ENCODE measurements at regions of chr1 and their contacts with region 1.

Region 1: DNA sequence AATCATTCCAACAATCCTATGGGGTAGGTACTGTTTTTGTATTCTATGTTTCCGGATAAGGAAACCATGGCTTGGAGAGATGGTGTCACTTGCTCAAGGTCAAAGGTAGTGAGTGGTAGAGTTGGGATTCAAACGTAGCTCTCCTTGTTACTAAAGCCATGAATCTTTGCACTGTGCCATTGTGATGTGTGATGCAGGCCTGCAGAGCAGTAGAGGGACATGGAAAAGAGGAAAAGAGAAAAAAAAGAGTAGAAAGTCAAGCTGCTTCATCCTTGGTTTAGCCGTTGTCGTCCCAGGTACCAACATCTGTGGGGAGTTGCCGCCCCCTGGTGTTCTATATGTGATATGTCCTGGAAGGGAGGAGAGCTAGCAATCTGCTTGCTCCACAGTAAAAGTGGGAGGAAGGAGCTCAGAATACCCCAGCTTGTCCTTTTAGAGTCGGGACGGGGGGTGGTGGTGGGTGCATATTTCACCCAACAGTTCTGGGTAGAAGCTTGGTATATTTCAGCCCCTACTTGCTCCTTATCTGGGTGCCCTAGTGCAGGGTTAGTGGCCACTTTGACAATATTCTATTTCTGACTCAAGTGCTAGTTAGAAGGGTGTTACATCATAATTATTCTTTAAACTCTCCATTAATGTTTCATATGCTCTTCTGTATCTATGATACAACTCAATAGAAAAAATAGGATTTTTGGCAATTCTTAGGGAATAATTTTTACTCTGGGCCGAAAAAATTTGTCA is 98.4 kb downstream of the EBNA1BP2 start:
- DNase-seq: peak; percentile 82
- ATAC-seq: peak; percentile 86
- H3K4me3 Mint-ChIP-seq: no peak overlapping the region
- H3K27ac Mint-ChIP-seq: peak overlapping the region; percentile 17
- H3K4me1 Mint-ChIP-seq: peaks cover 6% of the 10 kb centered on the region
- H3K27me3 Mint-ChIP-seq: peaks cover 2% of the 10 kb centered on the region

Region 2: GRCh38 chr1:42766741-42767509 is 306.7 kb before region 1 on chr1 and contains the starts of genes C1orf50 and P3H1:
- CTCF ChIA-PET with region 1: interaction called, 17 read pairs
- POLR2A ChIA-PET with region 1: interaction called, 5 read pairs
- DNase-seq: peak; percentile 100
- ATAC-seq: peak; percentile 96
- H3K4me3 Mint-ChIP-seq: no peak within 1 kb of the TSS
- H3K27ac Mint-ChIP-seq: peak within 1 kb of the TSS; percentile 96
- H3K4me1 Mint-ChIP-seq: peaks cover 31% of the 10 kb centered on the region
- H3K27me3 Mint-ChIP-seq: no peaks in the 10 kb centered on the region
- total RNA-seq, gene C1orf50: 6.3 to 6.7 TPM
- total RNA-seq, gene P3H1: 42.9 to 45.5 TPM

Region 3: GRCh38 chr1:42846257-42847110 is 227.2 kb before region 1 on chr1 and contains the start of gene ZNF691:
- CTCF ChIA-PET with region 1: interaction called, 20 read pairs
- POLR2A ChIA-PET with region 1: no interaction called
- DNase-seq: peak; percentile 94
- ATAC-seq: peak; percentile 99
- H3K4me3 Mint-ChIP-seq: peak within 1 kb of the TSS; percentile 87
- H3K27ac Mint-ChIP-seq: peak within 1 kb of the TSS; percentile 80
- H3K4me1 Mint-ChIP-seq: peaks cover 30% of the 10 kb centered on the region
- H3K27me3 Mint-ChIP-seq: no peaks in the 10 kb centered on the region
- total RNA-seq, gene ZNF691: 8.0 to 8.9 TPM

Region 4: GRCh38 chr1:42924082-42924850 is 149.4 kb before region 1 on chr1:
- CTCF ChIA-PET with region 1: interaction called, 401 read pairs
- POLR2A ChIA-PET with region 1: interaction called, 15 read pairs
- DNase-seq: peak; percentile 95
- ATAC-seq: peak; percentile 93
- H3K4me3 Mint-ChIP-seq: peak overlapping the region; percentile 90
- H3K27ac Mint-ChIP-seq: peak overlapping the region; percentile 95
- H3K4me1 Mint-ChIP-seq: peaks cover 60% of the 10 kb centered on the region
- H3K27me3 Mint-ChIP-seq: no peaks in the 10 kb centered on the region

Region 5: GRCh38 chr1:42941640-42942330 is 131.9 kb before region 1 on chr1:
- CTCF ChIA-PET with region 1: interaction called, 13 read pairs
- POLR2A ChIA-PET with region 1: no interaction called
- DNase-seq: no peak
- ATAC-seq: no peak
- H3K4me3 Mint-ChIP-seq: no peak overlapping the region
- H3K27ac Mint-ChIP-seq: peak overlapping the region; percentile 86
- H3K4me1 Mint-ChIP-seq: peaks cover 98% of the 10 kb centered on the region
- H3K27me3 Mint-ChIP-seq: no peaks in the 10 kb centered on the region

Region 6: DNA sequence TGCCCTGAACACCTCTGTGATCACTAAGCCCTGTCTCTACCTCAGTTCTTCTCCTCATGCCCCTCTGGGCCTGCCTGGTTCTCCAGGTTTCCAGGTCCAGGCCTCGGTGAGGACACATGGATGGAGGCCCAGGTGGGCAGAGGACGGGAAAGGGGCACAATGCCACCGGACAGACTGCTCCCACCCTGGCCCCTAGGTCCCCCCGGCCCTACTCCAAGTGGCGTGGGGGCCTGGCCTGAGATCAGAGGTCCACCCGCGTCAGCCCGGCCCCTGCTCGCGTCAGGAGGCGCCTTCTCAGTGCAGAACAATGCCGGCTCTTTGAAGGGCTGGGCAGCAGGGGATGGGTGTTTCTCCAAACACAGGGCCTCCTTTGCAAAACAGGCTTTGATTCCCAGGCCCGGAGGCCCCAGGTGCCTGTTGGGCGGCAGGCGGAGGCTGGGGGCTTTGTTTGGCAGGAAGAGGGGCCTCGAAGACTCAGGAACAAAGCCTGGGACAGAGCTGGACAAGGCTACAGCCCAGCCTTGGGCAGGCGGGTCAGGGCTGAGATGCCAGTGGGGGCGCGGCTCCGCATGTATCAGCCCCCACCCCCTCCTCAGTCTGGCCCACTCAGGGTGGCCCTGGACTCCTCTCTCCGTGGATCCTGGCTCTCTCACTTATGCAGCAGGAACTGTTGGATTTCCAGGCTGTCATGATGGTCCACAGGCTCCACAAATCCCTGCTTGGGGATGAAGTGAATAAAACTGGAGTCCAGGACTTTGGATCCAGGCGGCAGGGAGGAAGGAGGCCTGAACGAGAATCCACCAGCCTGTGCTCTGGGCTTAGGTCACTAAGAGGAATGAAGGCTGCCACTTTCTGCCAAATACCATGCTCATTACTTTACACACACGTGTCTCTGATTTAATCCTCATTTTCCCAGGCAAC is 37.6 kb before region 1 on chr1:
- CTCF ChIA-PET with region 1: interaction called, 13 read pairs
- POLR2A ChIA-PET with region 1: no interaction called
- DNase-seq: no peak
- ATAC-seq: no peak
- H3K4me3 Mint-ChIP-seq: no peak overlapping the region
- H3K27ac Mint-ChIP-seq: peak overlapping the region; percentile 63
- H3K4me1 Mint-ChIP-seq: peaks cover 19% of the 10 kb centered on the region
- H3K27me3 Mint-ChIP-seq: no peaks in the 10 kb centered on the region

Measured in activated CD8-positive, alpha-beta T cell treated with anti-CD3 and anti-CD28 coated beads, Interleukin-2, amount 10 ng/mL, durations not matched to agents 7 days and 5 days (primary cell).